ENCODE measurements at regions of chr4 and their contacts with region 1.

Region 1: GRCh38 chr4:2041234-2042130 is 17.6 kb upstream of the NAT8L start:
- H3K4me3 Mint-ChIP-seq: peak overlapping the region; percentile 93
- H3K27ac Mint-ChIP-seq: peak overlapping the region; percentile 81
- H3K4me1 Mint-ChIP-seq: peaks cover 23% of the 10 kb centered on the region
- H3K27me3 Mint-ChIP-seq: peaks cover 63% of the 10 kb centered on the region

Region 2: GRCh38 chr4:2008875-2009703 is 32.4 kb before region 1 on chr4 and contains the start of gene NELFA:
- intact Hi-C with region 1: loop called (anchors 1 kb)
- H3K4me3 Mint-ChIP-seq: peak within 1 kb of the TSS; percentile 84
- H3K27ac Mint-ChIP-seq: peak within 1 kb of the TSS; percentile 91
- H3K4me1 Mint-ChIP-seq: peaks cover 41% of the 10 kb centered on the region
- H3K27me3 Mint-ChIP-seq: peaks cover 8% of the 10 kb centered on the region